RWPE1 (cell line): ENCODE measurements at regions of chr22 and their contacts with region 1.

Region 1: GRCh38 chr22:40818747-40819598 is at the start of gene SLC25A17:
- DNase-seq: peak; percentile 95
- H3K27ac ChIP-seq: peak within 1 kb of the TSS; percentile 80
- CTCF ChIP-seq: peak; percentile 50

Region 2: GRCh38 chr22:40491990-40492631 is 326.9 kb before region 1 on chr22:
- CTCF ChIA-PET with region 1: no interaction called
- POLR2A ChIA-PET with region 1: interaction called, 12 read pairs
- DNase-seq: no peak
- H3K27ac ChIP-seq: peak overlapping the region; percentile 49; the same call in 1 of the 2 replicates
- CTCF ChIP-seq: no peak